ENCODE measurements at regions of chr2 and their contacts with region 1.

Region 1: GRCh38 chr2:1360144-1360543 is 53.1 kb upstream of the TPO start:
- DNase-seq: no peak
- H3K4me3 ChIP-seq: no peak overlapping the region
- H3K27ac ChIP-seq: no peak overlapping the region
- H3K4me1 ChIP-seq: no peaks in the 10 kb centered on the region
- H3K27me3 ChIP-seq: no peaks in the 10 kb centered on the region
- CTCF ChIP-seq: no peak
- EP300 ChIP-seq: no peak
- POLR2A ChIP-seq: no peak

Region 2: DNA sequence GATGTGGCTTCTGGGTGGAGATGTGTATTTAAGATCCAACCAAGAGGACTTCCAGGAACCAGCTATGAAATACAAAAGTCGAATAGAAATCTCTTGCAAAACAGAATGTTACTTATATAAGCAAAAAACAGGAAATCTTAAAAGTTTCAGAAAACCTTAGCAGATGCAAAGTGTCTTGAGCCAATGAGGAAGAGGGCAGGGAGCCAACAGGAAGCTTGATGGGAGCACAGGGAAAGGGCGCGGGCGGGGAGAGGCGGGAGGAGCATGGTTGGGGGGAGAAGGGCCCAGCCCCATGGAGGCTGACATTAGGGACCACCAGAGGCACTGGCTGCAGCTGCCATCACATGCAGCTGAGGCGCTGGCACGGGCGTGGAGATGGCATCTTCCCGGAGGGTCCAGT is 206.2 kb before region 1 on chr2:
- intact Hi-C with region 1: no loop called
- DNase-seq: no peak
- H3K4me3 ChIP-seq: no peak overlapping the region
- H3K27ac ChIP-seq: no peak overlapping the region
- H3K4me1 ChIP-seq: no peaks in the 10 kb centered on the region
- H3K27me3 ChIP-seq: no peaks in the 10 kb centered on the region
- CTCF ChIP-seq: no peak
- EP300 ChIP-seq: no peak
- POLR2A ChIP-seq: no peak

Region 3: GRCh38 chr2:1397350-1397749 is 37.2 kb after region 1 on chr2:
- intact Hi-C with region 1: loop called in 1 of 4 experiments (anchors 2 kb)
- DNase-seq: no peak
- H3K4me3 ChIP-seq: no peak overlapping the region
- H3K27ac ChIP-seq: no peak overlapping the region
- H3K4me1 ChIP-seq: no peaks in the 10 kb centered on the region
- H3K27me3 ChIP-seq: no peaks in the 10 kb centered on the region
- CTCF ChIP-seq: no peak
- EP300 ChIP-seq: no peak
- POLR2A ChIP-seq: no peak